CD14-positive monocyte (primary cell): ENCODE measurements at regions of chr4 and their contacts with region 1.

Region 1: DNA sequence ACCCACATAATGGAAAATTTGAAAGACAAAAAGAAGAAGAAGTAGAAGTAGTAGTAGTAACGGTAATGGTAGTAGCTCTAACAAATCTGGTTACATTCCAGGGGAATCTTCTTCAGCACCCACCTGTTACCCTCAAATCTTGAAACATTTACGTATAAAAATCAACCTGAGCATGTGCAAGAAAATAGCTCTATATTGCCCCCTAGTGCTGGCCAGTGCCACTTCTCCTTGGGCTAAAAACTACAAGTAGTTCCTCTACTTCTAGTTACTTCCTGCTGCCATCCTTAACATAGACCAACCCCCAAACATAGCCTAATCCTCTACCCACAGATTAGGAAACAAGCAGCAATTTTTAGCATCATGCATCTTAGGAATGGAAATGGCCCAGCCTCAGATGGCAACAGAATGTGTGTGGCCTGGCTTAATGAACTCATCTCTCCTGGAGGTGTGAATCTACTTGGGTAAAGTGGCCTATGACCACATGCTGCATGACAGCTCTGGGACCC is 3.1 kb downstream of the PDGFC start:
- DNase-seq: peak; percentile 74 to 82 (median 81)
- H3K4me3 ChIP-seq: peak overlapping the region in 1 of 3 experiments; percentile 39
- H3K4me3 Mint-ChIP-seq: peak overlapping the region; percentile 17 to 67
- H3K27ac ChIP-seq: no peak overlapping the region
- H3K27ac Mint-ChIP-seq: peak overlapping the region in 6 of 7 donors; percentile 30 to 83 (median 70)
- H3K4me1 ChIP-seq: peaks cover 55 to 64% of the 10 kb centered on the region in 2 donors
- H3K4me1 Mint-ChIP-seq: peaks cover 65% of the 10 kb centered on the region
- H3K27me3 ChIP-seq: no peaks in the 10 kb centered on the region
- H3K27me3 Mint-ChIP-seq: peaks cover 0 to 3% (median 1%) of the 10 kb centered on the region in 3 donors
- CTCF ChIP-seq: peak; percentile 91

Region 2: GRCh38 chr4:155960522-155960921 is 1008.0 kb before region 1 on chr4:
- intact Hi-C with region 1: loop called in 1 of 2 experiments (anchors 10 kb)
- DNase-seq: no peak
- H3K4me3 ChIP-seq: no peak overlapping the region
- H3K4me3 Mint-ChIP-seq: no peak overlapping the region
- H3K27ac ChIP-seq: no peak overlapping the region
- H3K27ac Mint-ChIP-seq: no peak overlapping the region
- H3K4me1 ChIP-seq: peaks cover 8 to 12% of the 10 kb centered on the region in 2 donors
- H3K4me1 Mint-ChIP-seq: peaks cover 11% of the 10 kb centered on the region
- H3K27me3 ChIP-seq: no peaks in the 10 kb centered on the region
- H3K27me3 Mint-ChIP-seq: peaks cover 0 to 2% (median 2%) of the 10 kb centered on the region in 3 donors
- CTCF ChIP-seq: no peak

Region 3: GRCh38 chr4:156515295-156515694 is 453.2 kb before region 1 on chr4:
- intact Hi-C with region 1: loop called in 1 of 2 experiments (anchors 5 kb)
- DNase-seq: peak; percentile 22 to 61 (median 51)
- H3K4me3 ChIP-seq: no peak overlapping the region
- H3K4me3 Mint-ChIP-seq: peak overlapping the region in 1 of 2 donors; percentile 22
- H3K27ac ChIP-seq: no peak overlapping the region
- H3K27ac Mint-ChIP-seq: peak overlapping the region in 3 of 7 donors; percentile 39 to 55 (median 44)
- H3K4me1 ChIP-seq: peaks cover 0 to 4% of the 10 kb centered on the region in 2 donors
- H3K4me1 Mint-ChIP-seq: peaks cover 9% of the 10 kb centered on the region
- H3K27me3 ChIP-seq: no peaks in the 10 kb centered on the region
- H3K27me3 Mint-ChIP-seq: peaks cover 0 to 1% (median 0%) of the 10 kb centered on the region in 3 donors
- CTCF ChIP-seq: no peak

Region 4: GRCh38 chr4:156830351-156830750 is 138.2 kb before region 1 on chr4:
- intact Hi-C with region 1: loop called in 1 of 2 experiments (anchors 10 kb)
- DNase-seq: peak in 2 of 3 donors; percentile 7 to 43
- H3K4me3 ChIP-seq: no peak overlapping the region
- H3K4me3 Mint-ChIP-seq: no peak overlapping the region
- H3K27ac ChIP-seq: no peak overlapping the region
- H3K27ac Mint-ChIP-seq: peak overlapping the region in 6 of 7 donors; percentile 45 to 79 (median 69)
- H3K4me1 ChIP-seq: peaks cover 15 to 32% of the 10 kb centered on the region in 2 donors
- H3K4me1 Mint-ChIP-seq: peaks cover 22% of the 10 kb centered on the region
- H3K27me3 ChIP-seq: no peaks in the 10 kb centered on the region
- H3K27me3 Mint-ChIP-seq: no peaks in the 10 kb centered on the region
- CTCF ChIP-seq: no peak

Region 5: GRCh38 chr4:156889616-156890594 is 78.6 kb before region 1 on chr4:
- intact Hi-C with region 1: loop called in 1 of 2 experiments (anchors 5 kb)
- DNase-seq: peak in 2 of 3 donors; percentile 24 to 26
- H3K4me3 ChIP-seq: peak overlapping the region in 1 of 3 experiments; percentile 13
- H3K4me3 Mint-ChIP-seq: peak overlapping the region in 1 of 2 donors; percentile 30
- H3K27ac ChIP-seq: peak overlapping the region in 1 of 2 donors; percentile 43
- H3K27ac Mint-ChIP-seq: peak overlapping the region in 5 of 7 donors; percentile 39 to 79 (median 58)
- H3K4me1 ChIP-seq: peaks cover 20 to 40% of the 10 kb centered on the region in 2 donors
- H3K4me1 Mint-ChIP-seq: peaks cover 39% of the 10 kb centered on the region
- H3K27me3 ChIP-seq: no peaks in the 10 kb centered on the region
- H3K27me3 Mint-ChIP-seq: peaks cover 0 to 2% (median 0%) of the 10 kb centered on the region in 3 donors
- CTCF ChIP-seq: no peak

Region 6: GRCh38 chr4:156931267-156931666 is 37.3 kb before region 1 on chr4:
- intact Hi-C with region 1: no loop called
- DNase-seq: no peak
- H3K4me3 ChIP-seq: no peak overlapping the region
- H3K4me3 Mint-ChIP-seq: no peak overlapping the region
- H3K27ac ChIP-seq: no peak overlapping the region
- H3K27ac Mint-ChIP-seq: peak overlapping the region in 1 of 7 donors; percentile 27
- H3K4me1 ChIP-seq: no peaks in the 10 kb centered on the region
- H3K4me1 Mint-ChIP-seq: peaks cover 5% of the 10 kb centered on the region
- H3K27me3 ChIP-seq: no peaks in the 10 kb centered on the region
- H3K27me3 Mint-ChIP-seq: no peaks in the 10 kb centered on the region
- CTCF ChIP-seq: no peak